ENCODE measurements at regions of chr11 and their contacts with region 1.

Region 1: DNA sequence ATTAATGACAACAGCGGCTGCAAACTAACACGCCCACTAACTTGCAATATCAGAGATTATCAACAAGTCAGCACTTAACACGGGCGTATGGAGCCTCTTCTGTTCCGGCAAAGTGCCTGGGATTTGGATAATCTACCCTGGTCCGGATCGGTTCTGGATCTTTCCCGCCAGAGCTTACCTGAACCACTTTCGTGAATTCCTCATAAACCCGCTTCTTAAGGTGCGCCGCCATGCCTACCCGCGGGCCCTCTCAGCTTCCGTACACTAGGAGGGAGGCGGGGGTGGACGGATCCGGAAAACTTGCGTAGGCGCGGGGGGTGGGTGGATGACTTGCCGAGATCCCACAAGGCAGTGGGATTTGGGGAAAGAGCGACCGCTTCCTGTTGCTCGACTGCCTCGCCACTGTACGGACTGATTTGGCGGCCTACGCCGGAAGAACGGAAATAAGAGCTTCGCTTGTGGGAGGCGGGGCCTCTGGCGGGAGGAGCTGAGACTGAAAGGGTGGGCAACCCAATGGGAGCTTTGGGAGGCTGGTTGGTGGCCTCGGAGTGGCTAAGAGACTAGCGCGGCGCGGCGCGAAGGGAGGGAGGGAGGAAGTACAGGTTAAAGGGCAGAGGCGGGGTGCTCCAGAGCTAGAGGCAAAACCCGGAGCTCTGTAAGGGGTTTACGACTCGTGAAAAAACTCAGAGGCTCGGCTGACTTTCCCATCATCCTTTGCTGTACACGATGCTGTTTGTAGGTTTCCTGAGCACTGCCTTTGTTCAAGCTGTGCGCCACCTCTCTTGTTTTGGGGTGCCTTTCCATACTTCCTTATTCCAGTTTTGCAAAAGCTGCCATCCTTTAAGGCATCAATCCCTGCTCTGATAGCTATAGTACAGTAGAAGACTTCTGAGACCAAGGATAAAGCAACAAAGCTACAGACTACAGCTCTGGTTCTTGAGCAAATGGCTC is at the start of gene INTS4:
- DNase-seq: peak; percentile 92 to 99 (median 97)
- ATAC-seq: peak; percentile 97
- H3K4me3 ChIP-seq: peak within 1 kb of the TSS; percentile 79 to 81
- H3K4me3 Mint-ChIP-seq: peak within 1 kb of the TSS; percentile 96
- H3K27ac ChIP-seq: peak within 1 kb of the TSS; percentile 75 to 91
- H3K27ac Mint-ChIP-seq: peak within 1 kb of the TSS; percentile 99
- H3K4me1 ChIP-seq: peaks cover 22% of the 10 kb centered on the region
- H3K4me1 Mint-ChIP-seq: peaks cover 30% of the 10 kb centered on the region
- H3K27me3 ChIP-seq: no peaks in the 10 kb centered on the region
- H3K27me3 Mint-ChIP-seq: no peaks in the 10 kb centered on the region
- CTCF ChIP-seq: no peak
- total RNA-seq, gene INTS4: 39.4 to 49.0 TPM

Region 2: DNA sequence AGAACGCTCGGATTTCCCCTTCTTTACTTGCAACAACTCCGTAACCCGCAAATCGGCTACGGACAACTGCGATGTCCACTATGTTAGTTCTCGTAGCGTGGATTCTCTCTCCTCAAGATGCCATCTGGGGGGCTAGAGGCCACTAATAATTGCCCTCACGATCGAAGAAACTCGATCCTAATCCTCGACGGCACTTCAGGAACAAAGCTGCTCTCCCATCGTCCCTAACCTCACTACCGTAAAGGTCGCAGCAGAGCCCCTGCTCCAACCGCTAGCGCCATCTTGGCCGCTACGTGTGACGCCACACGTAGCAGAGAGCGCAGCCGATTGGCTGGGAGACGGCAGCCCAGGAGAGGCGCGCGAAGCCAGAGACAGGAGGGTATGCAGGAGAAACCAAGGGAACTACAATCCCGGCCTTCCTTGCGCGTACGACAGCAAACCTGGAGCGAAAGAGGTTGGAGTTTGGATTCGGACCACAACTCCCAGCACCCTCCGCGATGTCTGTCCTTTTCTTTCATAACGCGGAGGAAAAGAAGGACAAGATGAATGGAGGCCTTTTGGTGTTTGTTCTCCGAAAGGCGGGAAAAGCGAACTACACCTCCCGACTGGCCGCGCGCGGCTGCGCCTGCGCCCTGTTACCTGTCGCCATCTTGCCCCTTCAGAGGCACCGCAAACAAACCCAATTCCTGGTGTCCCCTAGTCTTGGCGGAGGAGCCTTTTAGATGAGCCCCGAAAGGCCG is 1550.1 kb before region 1 on chr11 and contains the start of gene EMSY:
- CTCF ChIA-PET with region 1: no interaction called
- POLR2A ChIA-PET with region 1: no interaction called
- intact Hi-C with region 1: loop called (anchors 10 kb)
- DNase-seq: peak; percentile 77 to 97 (median 90)
- ATAC-seq: peak; percentile 91
- H3K4me3 ChIP-seq: peak within 1 kb of the TSS; percentile 58 to 100
- H3K4me3 Mint-ChIP-seq: peak within 1 kb of the TSS; percentile 94
- H3K27ac ChIP-seq: peak within 1 kb of the TSS; percentile 70 to 97
- H3K27ac Mint-ChIP-seq: peak within 1 kb of the TSS; percentile 96
- H3K4me1 ChIP-seq: peaks cover 20% of the 10 kb centered on the region
- H3K4me1 Mint-ChIP-seq: peaks cover 38% of the 10 kb centered on the region
- H3K27me3 ChIP-seq: no peaks in the 10 kb centered on the region
- H3K27me3 Mint-ChIP-seq: no peaks in the 10 kb centered on the region
- CTCF ChIP-seq: no peak
- total RNA-seq, gene EMSY: 19.8 to 20.7 TPM

Region 3: DNA sequence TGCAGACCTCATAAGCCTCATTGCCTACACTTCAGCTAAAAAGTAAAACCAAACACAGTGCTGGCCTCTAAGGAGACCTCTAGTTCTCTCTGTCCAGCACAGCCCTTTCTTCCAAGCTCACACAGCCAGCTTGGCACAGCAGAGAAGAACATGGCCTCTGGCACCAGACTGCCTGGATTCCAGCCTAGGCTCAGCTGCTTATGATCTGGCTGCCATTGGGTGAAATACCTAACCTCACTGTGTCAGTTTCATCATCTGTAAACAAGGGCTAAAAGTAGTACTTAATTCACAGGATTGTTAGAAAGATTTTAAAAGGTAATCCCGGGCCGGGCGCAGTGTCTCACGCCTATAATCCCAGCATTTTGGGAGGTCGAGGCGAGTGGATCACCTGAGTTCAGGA is 1143.9 kb before region 1 on chr11:
- CTCF ChIA-PET with region 1: no interaction called
- POLR2A ChIA-PET with region 1: no interaction called
- intact Hi-C with region 1: no loop called
- DNase-seq: no peak
- ATAC-seq: no peak
- H3K4me3 ChIP-seq: no peak overlapping the region
- H3K4me3 Mint-ChIP-seq: no peak overlapping the region
- H3K27ac ChIP-seq: no peak overlapping the region
- H3K27ac Mint-ChIP-seq: no peak overlapping the region
- H3K4me1 ChIP-seq: no peaks in the 10 kb centered on the region
- H3K4me1 Mint-ChIP-seq: no peaks in the 10 kb centered on the region
- H3K27me3 ChIP-seq: no peaks in the 10 kb centered on the region
- H3K27me3 Mint-ChIP-seq: peaks cover 19% of the 10 kb centered on the region
- CTCF ChIP-seq: no peak

Region 4: DNA sequence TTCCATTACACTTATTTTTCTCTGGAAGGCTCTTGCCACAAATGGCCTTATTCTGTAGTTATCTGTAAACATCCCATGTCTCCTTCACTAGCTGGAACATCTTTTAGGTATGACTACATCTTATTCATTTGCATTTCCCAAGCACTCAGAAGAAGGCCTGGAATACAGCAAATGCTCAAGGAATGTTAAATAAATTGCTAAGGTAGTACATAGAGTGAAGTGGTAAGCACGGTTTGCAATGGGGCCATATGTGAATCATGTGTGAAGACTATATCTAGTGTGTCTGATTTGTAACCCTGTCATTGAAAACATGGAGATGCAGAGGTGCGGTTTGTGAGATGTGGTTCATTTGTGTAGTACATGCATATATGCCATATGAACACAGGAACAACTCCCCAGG is 726.7 kb before region 1 on chr11:
- CTCF ChIA-PET with region 1: no interaction called
- POLR2A ChIA-PET with region 1: no interaction called
- intact Hi-C with region 1: no loop called
- DNase-seq: no peak
- ATAC-seq: no peak
- H3K4me3 ChIP-seq: no peak overlapping the region
- H3K4me3 Mint-ChIP-seq: no peak overlapping the region
- H3K27ac ChIP-seq: no peak overlapping the region
- H3K27ac Mint-ChIP-seq: no peak overlapping the region
- H3K4me1 ChIP-seq: no peaks in the 10 kb centered on the region
- H3K4me1 Mint-ChIP-seq: no peaks in the 10 kb centered on the region
- H3K27me3 ChIP-seq: no peaks in the 10 kb centered on the region
- H3K27me3 Mint-ChIP-seq: no peaks in the 10 kb centered on the region
- CTCF ChIP-seq: no peak

Region 5: DNA sequence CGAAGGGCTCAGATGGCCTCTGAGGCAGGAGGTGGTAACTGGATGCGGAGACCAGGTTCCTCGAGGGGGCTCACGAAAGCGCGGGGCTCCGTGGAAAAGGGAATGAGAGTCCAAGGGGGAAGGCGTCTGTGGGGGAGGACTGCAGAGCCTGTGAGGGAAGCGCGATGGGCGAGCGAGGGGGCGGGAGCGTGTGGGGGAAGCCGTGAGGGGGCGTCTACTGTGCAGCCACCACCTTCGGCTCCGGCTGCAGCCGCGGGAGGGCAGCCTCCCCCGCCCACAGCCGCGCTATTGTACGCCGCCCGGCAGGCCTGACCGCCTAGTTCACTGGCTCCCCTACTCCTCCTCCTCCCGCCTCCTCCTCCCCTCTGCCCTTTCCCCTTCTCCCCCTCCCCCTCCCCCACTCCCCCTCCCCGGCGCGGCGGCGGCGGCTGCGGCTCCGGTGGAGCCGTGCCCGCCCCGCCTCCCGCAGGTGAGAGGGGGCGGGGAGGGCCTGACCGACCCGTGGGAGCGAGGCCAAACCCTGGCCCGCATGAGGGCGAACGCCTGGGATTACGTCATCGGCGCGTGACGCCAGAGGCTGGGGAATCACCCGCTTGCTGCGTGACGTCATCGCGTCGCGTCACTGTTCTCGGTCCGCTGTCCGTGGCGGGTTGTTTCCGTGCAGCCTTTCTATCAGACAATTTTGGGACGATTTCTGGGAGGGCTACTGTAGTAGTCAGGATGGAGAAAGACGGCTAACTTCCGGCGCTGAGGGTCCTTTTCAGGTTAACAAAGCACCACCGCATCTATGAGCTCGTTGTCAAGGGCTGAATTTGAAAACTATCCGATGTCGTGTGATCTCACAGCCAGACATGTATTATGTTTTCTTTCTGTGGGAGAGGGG is 520.6 kb before region 1 on chr11 and contains the start of gene PAK1:
- CTCF ChIA-PET with region 1: no interaction called
- POLR2A ChIA-PET with region 1: no interaction called
- intact Hi-C with region 1: loop called in 1 of 2 experiments (anchors 10 kb)
- DNase-seq: peak; percentile 63 to 99 (median 87)
- ATAC-seq: peak; percentile 73
- H3K4me3 ChIP-seq: peak within 1 kb of the TSS; percentile 56 to 58
- H3K4me3 Mint-ChIP-seq: peak within 1 kb of the TSS; percentile 88
- H3K27ac ChIP-seq: peak within 1 kb of the TSS; percentile 49 to 69
- H3K27ac Mint-ChIP-seq: peak within 1 kb of the TSS; percentile 97
- H3K4me1 ChIP-seq: peaks cover 11% of the 10 kb centered on the region
- H3K4me1 Mint-ChIP-seq: peaks cover 30% of the 10 kb centered on the region
- H3K27me3 ChIP-seq: no peaks in the 10 kb centered on the region
- H3K27me3 Mint-ChIP-seq: peaks cover 4% of the 10 kb centered on the region
- CTCF ChIP-seq: no peak
- total RNA-seq, gene PAK1: 16.9 to 18.7 TPM

Region 6: GRCh38 chr11:77730789-77731188 is 263.9 kb before region 1 on chr11:
- CTCF ChIA-PET with region 1: no interaction called
- POLR2A ChIA-PET with region 1: no interaction called
- intact Hi-C with region 1: no loop called
- DNase-seq: no peak
- ATAC-seq: no peak
- H3K4me3 ChIP-seq: no peak overlapping the region
- H3K4me3 Mint-ChIP-seq: no peak overlapping the region
- H3K27ac ChIP-seq: no peak overlapping the region
- H3K27ac Mint-ChIP-seq: no peak overlapping the region
- H3K4me1 ChIP-seq: no peaks in the 10 kb centered on the region
- H3K4me1 Mint-ChIP-seq: no peaks in the 10 kb centered on the region
- H3K27me3 ChIP-seq: no peaks in the 10 kb centered on the region
- H3K27me3 Mint-ChIP-seq: no peaks in the 10 kb centered on the region
- CTCF ChIP-seq: no peak

Region 7: GRCh38 chr11:78045851-78046485 is 51.3 kb after region 1 on chr11:
- CTCF ChIA-PET with region 1: interaction called, 6 read pairs
- POLR2A ChIA-PET with region 1: interaction called, 7 read pairs
- intact Hi-C with region 1: loop called (anchors 2 to 5 kb)
- DNase-seq: peak; percentile 58 to 90 (median 78)
- ATAC-seq: peak; percentile 95
- H3K4me3 ChIP-seq: peak overlapping the region; percentile 15 to 48
- H3K4me3 Mint-ChIP-seq: peak overlapping the region; percentile 63
- H3K27ac ChIP-seq: no peak overlapping the region
- H3K27ac Mint-ChIP-seq: no peak overlapping the region
- H3K4me1 ChIP-seq: peaks cover 5% of the 10 kb centered on the region
- H3K4me1 Mint-ChIP-seq: peaks cover 13% of the 10 kb centered on the region
- H3K27me3 ChIP-seq: no peaks in the 10 kb centered on the region
- H3K27me3 Mint-ChIP-seq: no peaks in the 10 kb centered on the region
- CTCF ChIP-seq: peak; percentile 97

Region 8: GRCh38 chr11:78188286-78189173 is 193.8 kb after region 1 on chr11 and contains the starts of genes KCTD21 and USP35:
- CTCF ChIA-PET with region 1: no interaction called
- POLR2A ChIA-PET with region 1: interaction called, 12 read pairs
- intact Hi-C with region 1: loop called (anchors 1 to 5 kb)
- DNase-seq: peak; percentile 78 to 95 (median 91)
- ATAC-seq: peak; percentile 79
- H3K4me3 ChIP-seq: peak within 1 kb of the TSS; percentile 90 to 100
- H3K4me3 Mint-ChIP-seq: peak within 1 kb of the TSS; percentile 97
- H3K27ac ChIP-seq: peak within 1 kb of the TSS; percentile 73 to 75
- H3K27ac Mint-ChIP-seq: peak within 1 kb of the TSS; percentile 98
- H3K4me1 ChIP-seq: peaks cover 37% of the 10 kb centered on the region
- H3K4me1 Mint-ChIP-seq: peaks cover 55% of the 10 kb centered on the region
- H3K27me3 ChIP-seq: no peaks in the 10 kb centered on the region
- H3K27me3 Mint-ChIP-seq: no peaks in the 10 kb centered on the region
- CTCF ChIP-seq: no peak
- total RNA-seq, gene KCTD21: 3.0 to 3.4 TPM
- total RNA-seq, gene USP35: 22.3 to 23.4 TPM